ENCODE measurements at regions of chr15 and their contacts with region 1.

Region 1: GRCh38 chr15:90954712-90955671 is at the start of gene RCCD1:
- DNase-seq: peak; percentile 68
- H3K4me3 ChIP-seq: peak within 1 kb of the TSS; percentile 78
- H3K27me3 ChIP-seq: no peaks in the 10 kb centered on the region
- CTCF ChIP-seq: no peak
- polyA plus RNA-seq, gene RCCD1: 7.0 and 9.6 TPM in 2 replicates

Region 2: GRCh38 chr15:90931737-90932659 is 23.0 kb before region 1 on chr15 and contains the start of gene HDDC3:
- CTCF ChIA-PET with region 1: interaction called, 87 read pairs
- POLR2A ChIA-PET with region 1: no interaction called
- DNase-seq: no peak
- H3K4me3 ChIP-seq: peak within 1 kb of the TSS; percentile 65
- H3K27me3 ChIP-seq: no peaks in the 10 kb centered on the region
- CTCF ChIP-seq: peak; percentile 94
- polyA plus RNA-seq, gene HDDC3: 12.3 and 12.4 TPM in 2 replicates

Region 3: DNA sequence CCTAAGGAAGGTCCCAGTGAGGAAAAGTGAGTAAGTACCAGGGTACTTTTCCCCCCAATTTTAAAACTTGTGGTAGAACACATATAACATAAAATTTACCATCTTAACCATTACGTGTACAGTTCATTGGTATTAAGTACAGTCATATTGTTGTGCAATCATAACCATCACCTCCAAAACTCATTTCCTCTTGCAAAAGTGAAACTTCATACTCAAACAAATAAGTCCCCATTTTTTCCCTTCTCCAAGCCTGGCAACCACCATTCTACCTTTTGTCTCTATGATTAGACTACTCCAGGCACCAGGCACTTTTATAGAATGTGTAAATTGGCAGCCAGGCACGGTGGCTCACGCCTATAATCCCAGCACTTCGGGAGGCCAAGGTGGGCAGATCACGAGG is 27.1 kb after region 1 on chr15:
- CTCF ChIA-PET with region 1: interaction called, 84 read pairs
- POLR2A ChIA-PET with region 1: interaction called, 10 read pairs
- DNase-seq: no peak
- H3K4me3 ChIP-seq: no peak overlapping the region
- H3K27me3 ChIP-seq: no peaks in the 10 kb centered on the region
- CTCF ChIP-seq: no peak

Region 4: GRCh38 chr15:91049378-91050127 is 94.6 kb after region 1 on chr15:
- CTCF ChIA-PET with region 1: interaction called, 122 read pairs
- POLR2A ChIA-PET with region 1: no interaction called
- DNase-seq: no peak
- H3K4me3 ChIP-seq: no peak overlapping the region
- H3K27me3 ChIP-seq: no peaks in the 10 kb centered on the region; the same call in 1 of the 2 replicates
- CTCF ChIP-seq: peak; percentile 84

Region 5: GRCh38 chr15:91249591-91249990 is 294.6 kb after region 1 on chr15:
- CTCF ChIA-PET with region 1: no interaction called
- POLR2A ChIA-PET with region 1: no interaction called
- DNase-seq: no peak
- H3K4me3 ChIP-seq: no peak overlapping the region
- H3K27me3 ChIP-seq: no peaks in the 10 kb centered on the region
- CTCF ChIP-seq: no peak

Region 6: DNA sequence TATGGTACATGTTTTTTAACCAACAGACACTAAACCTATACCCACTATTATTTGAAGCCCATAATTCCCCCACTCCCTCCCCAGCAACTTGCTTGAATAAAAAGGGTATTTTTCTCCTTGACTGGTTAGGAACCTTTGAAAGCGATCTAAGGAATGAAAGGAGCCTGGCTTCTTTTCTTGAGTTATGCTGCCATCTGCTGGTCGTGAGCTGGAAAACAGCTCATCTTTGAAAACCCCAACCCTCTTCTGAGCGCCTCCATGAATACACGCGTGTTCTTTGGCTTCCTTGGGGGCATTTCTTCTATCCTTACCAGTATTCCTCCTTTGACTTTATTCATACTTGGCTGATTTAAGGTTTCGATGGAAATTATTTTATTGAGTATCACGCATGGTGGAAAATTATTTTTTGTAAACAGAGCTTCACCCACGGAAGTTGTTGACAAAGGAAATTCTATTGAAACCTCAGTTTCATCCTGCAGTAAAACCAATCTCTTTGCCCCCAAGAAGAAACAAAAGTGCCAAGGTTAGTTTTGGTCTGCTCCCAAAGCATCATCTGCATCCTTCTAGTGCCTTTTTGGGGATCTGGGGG is 316.7 kb after region 1 on chr15:
- CTCF ChIA-PET with region 1: interaction called, 29 read pairs
- POLR2A ChIA-PET with region 1: no interaction called
- DNase-seq: no peak
- H3K4me3 ChIP-seq: no peak overlapping the region
- H3K27me3 ChIP-seq: no peaks in the 10 kb centered on the region
- CTCF ChIP-seq: peak; percentile 77

Measured in BJ (cell line).